ENCODE measurements at regions of chr3 and their contacts with region 1.

Region 1: GRCh38 chr3:14822670-14823390 is 4.1 kb downstream of the FGD5 start:
- DNase-seq: peak; percentile 32
- H3K4me3 ChIP-seq: no peak overlapping the region
- H3K27ac ChIP-seq: peak overlapping the region; percentile 14
- H3K4me1 ChIP-seq: peaks cover 26% of the 10 kb centered on the region
- H3K27me3 ChIP-seq: no peaks in the 10 kb centered on the region
- CTCF ChIP-seq: no peak
- POLR2A ChIP-seq: no peak

Region 2: DNA sequence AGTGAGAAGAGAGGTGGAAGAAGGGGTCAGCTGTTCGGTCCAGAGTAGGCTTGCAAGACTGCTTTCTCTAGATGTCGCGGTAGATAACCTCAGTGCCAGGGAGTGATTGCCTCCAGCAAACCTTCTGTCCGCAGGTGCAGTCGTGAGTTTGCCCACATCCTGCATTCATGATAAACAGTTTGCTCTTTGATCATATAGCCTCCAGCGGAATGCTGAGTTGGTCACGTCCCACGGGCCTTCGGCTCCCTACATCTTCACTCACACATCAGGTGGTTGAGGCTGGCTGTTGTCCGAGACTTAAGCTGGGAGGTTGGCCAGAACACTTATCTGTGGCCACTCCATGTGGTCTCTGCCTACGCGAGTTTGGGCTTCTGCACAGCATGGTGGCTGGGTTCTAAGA is 62.5 kb after region 1 on chr3:
- CTCF ChIA-PET with region 1: no interaction called
- POLR2A ChIA-PET with region 1: no interaction called
- dilution Hi-C with region 1: loop called (anchors 10 kb)
- intact Hi-C with region 1: no loop called
- DNase-seq: no peak
- H3K4me3 ChIP-seq: no peak overlapping the region
- H3K27ac ChIP-seq: no peak overlapping the region
- H3K4me1 ChIP-seq: peaks cover 3% of the 10 kb centered on the region
- H3K27me3 ChIP-seq: no peaks in the 10 kb centered on the region
- CTCF ChIP-seq: no peak
- POLR2A ChIP-seq: no peak